Activated CD4-positive, alpha-beta T cell treated with anti-CD3 and anti-CD28 coated beads, Interleukin-2, amount 10 ng/mL, durations not matched to agents 7 days and 5 days (primary cell): ENCODE measurements at regions of chr16 and their contacts with region 1.

Region 1: DNA sequence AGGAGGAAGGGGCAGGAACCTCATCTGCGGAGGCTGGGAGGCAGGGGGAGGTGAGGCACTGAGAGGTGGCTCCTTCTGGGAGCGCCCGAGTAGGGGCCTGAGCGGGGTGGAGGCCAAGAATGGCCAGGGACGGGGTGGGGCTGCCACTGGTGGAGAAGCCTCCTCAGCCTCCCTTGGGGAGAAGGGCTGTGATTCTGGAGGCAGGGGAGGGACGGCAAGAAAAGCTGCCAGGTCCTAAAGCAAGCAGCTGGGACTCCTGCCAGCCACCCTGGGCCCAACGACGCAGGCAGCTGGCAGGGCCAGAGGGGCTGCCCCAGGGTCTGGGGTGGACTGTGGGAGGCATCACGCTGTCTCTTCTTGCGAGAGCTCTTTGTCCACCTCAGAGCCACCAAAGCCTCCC is 12.7 kb upstream of the MLKL start:
- DNase-seq: no peak
- H3K4me3 Mint-ChIP-seq: no peak overlapping the region
- H3K27ac Mint-ChIP-seq: no peak overlapping the region
- H3K4me1 Mint-ChIP-seq: peaks cover 4% of the 10 kb centered on the region
- H3K27me3 Mint-ChIP-seq: no peaks in the 10 kb centered on the region

Region 2: GRCh38 chr16:74700438-74701225 is 12.7 kb before region 1 on chr16 and contains the start of gene MLKL:
- CTCF ChIA-PET with region 1: interaction called, 12 read pairs
- POLR2A ChIA-PET with region 1: no interaction called
- DNase-seq: peak; percentile 56
- H3K4me3 Mint-ChIP-seq: peak within 1 kb of the TSS; percentile 99
- H3K27ac Mint-ChIP-seq: peak within 1 kb of the TSS; percentile 99
- H3K4me1 Mint-ChIP-seq: peaks cover 58% of the 10 kb centered on the region
- H3K27me3 Mint-ChIP-seq: no peaks in the 10 kb centered on the region
- total RNA-seq, gene MLKL: 36.7 to 42.0 TPM